Activated T-helper 2 cell treated with anti-CD3 and anti-CD28 coated beads, Interferon-gamma antibody, Interleukin-2, Interleukin-4, amounts not matched to agents 10 μg/mL and 5 μg/mL and 100 μg/mL, durations not matched to agents 14 hours and 24 hours and 36 hours (primary cell): ENCODE measurements at regions of chr10 and their contacts with region 1.

Region 1: GRCh38 chr10:5563991-5564536 is 39.3 kb downstream of the CALML3 start:
- DNase-seq: peak; percentile 38
- H3K4me3 Mint-ChIP-seq: peak overlapping the region; percentile 27
- H3K27ac Mint-ChIP-seq: peak overlapping the region; percentile 79
- H3K4me1 Mint-ChIP-seq: peaks cover 31% of the 10 kb centered on the region
- H3K27me3 Mint-ChIP-seq: peaks cover 7% of the 10 kb centered on the region

Region 2: GRCh38 chr10:5376450-5376849 is 187.6 kb before region 1 on chr10:
- intact Hi-C with region 1: no loop called
- DNase-seq: no peak
- H3K4me3 Mint-ChIP-seq: no peak overlapping the region
- H3K27ac Mint-ChIP-seq: no peak overlapping the region
- H3K4me1 Mint-ChIP-seq: no peaks in the 10 kb centered on the region
- H3K27me3 Mint-ChIP-seq: no peaks in the 10 kb centered on the region

Region 3: DNA sequence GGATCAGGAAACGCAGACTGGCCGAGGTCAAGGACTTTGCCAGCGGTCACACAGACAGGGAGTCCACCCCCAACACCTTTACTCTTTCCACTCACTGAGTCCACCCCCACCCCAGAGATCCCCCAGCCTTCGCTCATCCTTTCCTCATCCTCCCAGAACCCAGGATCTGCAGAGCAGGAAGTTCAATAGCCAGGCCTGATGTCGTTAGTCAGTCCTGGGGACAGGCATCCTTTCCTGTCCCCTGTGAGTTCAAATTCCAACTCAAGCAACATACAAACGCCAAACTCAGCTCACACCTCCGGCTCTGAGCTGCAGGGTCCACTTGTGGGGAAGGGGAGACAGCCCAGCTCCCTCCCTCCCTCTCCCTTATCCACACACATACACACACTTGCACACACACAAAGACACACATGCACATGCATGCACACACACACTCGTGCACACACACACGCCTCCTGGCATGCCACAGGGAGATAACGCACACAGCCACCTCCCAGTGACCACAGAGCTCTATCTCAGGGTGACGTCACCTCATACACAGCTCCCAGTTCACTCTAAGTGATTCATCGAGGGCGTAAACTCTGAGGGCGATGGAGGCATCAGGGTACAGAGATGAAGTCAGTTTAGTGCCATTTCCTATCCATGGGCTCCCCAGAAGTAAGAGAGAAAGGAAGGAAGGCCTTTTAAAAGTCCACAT is 15.4 kb before region 1 on chr10:
- intact Hi-C with region 1: loop called (anchors 1 kb)
- DNase-seq: peak; percentile 69
- H3K4me3 Mint-ChIP-seq: no peak overlapping the region
- H3K27ac Mint-ChIP-seq: no peak overlapping the region
- H3K4me1 Mint-ChIP-seq: peaks cover 30% of the 10 kb centered on the region
- H3K27me3 Mint-ChIP-seq: peaks cover 4% of the 10 kb centered on the region

Region 4: GRCh38 chr10:5589715-5590521 is 25.9 kb after region 1 on chr10:
- intact Hi-C with region 1: no loop called
- DNase-seq: no peak
- H3K4me3 Mint-ChIP-seq: no peak overlapping the region
- H3K27ac Mint-ChIP-seq: no peak overlapping the region
- H3K4me1 Mint-ChIP-seq: peaks cover 7% of the 10 kb centered on the region
- H3K27me3 Mint-ChIP-seq: peaks cover 18% of the 10 kb centered on the region